RWPE1 (cell line): ENCODE measurements at regions of chr12 and their contacts with region 1.

Region 1: DNA sequence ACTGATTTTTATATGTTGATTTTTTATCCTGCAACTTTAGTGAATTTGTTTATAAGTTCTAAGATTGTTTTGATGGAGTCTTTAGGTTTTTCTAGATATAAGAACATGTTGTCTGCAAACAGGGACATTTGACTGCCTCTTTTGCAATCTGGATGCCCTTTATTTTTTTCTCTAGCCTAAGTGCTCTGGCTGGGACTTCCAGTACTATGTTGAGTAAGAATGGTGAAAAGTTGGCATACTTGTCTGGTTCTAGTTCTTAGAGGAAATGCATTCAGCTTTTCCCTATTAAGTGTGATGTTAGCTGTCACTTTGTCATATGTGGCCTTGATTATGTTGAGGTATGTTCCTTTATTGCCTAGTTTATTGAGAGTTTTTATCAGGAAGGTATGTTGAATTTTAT is 68.1 kb downstream of the ERC1 start:
- DNase-seq: no peak
- H3K27ac ChIP-seq: no peak overlapping the region
- CTCF ChIP-seq: no peak

Region 2: DNA sequence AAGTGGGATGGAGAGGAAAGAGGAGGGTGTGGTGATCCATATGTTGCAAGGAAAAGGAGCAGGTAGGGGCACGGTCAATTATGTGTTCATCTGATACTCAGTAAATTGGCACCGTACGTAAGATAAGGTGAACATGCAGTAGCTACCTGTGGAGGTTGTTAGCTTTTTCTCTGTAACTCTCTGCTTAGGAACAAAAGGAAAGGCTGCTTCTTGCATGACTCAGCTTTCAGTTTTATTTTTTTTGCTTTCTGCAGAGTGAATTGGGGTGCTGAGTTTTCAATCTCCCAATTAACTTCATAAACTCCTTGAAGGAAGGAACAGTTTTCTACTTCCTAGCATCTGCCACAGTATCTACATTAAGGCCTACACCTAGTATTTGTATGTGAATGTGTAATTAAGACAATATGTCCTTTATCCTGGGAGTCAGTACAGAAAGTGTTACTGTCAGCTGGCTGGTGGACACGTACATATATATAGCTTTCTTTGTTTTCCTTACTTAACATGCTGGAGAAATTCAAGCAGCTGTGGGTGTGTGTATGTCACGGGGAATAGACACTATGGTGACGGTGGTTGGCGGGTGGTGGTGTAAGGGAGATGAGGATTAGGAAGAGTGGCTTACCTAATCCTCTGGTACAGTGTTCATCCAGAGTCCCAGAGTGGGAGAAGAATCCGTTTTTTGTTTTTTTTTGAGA is 346.8 kb before region 1 on chr12:
- CTCF ChIA-PET with region 1: interaction called, 10 read pairs
- POLR2A ChIA-PET with region 1: no interaction called
- DNase-seq: no peak
- H3K27ac ChIP-seq: no peak overlapping the region
- CTCF ChIP-seq: no peak

Region 3: GRCh38 chr12:1147821-1148220 is 88.7 kb after region 1 on chr12:
- CTCF ChIA-PET with region 1: no interaction called
- POLR2A ChIA-PET with region 1: no interaction called
- DNase-seq: no peak
- H3K27ac ChIP-seq: no peak overlapping the region
- CTCF ChIP-seq: no peak